ENCODE measurements at regions of chr14 and their contacts with region 1.

Region 1: GRCh38 chr14:54712465-54713200 is 145.7 kb downstream of the SAMD4A start:
- DNase-seq: no peak
- H3K4me3 ChIP-seq: no peak overlapping the region
- CTCF ChIP-seq: no peak

Region 2: DNA sequence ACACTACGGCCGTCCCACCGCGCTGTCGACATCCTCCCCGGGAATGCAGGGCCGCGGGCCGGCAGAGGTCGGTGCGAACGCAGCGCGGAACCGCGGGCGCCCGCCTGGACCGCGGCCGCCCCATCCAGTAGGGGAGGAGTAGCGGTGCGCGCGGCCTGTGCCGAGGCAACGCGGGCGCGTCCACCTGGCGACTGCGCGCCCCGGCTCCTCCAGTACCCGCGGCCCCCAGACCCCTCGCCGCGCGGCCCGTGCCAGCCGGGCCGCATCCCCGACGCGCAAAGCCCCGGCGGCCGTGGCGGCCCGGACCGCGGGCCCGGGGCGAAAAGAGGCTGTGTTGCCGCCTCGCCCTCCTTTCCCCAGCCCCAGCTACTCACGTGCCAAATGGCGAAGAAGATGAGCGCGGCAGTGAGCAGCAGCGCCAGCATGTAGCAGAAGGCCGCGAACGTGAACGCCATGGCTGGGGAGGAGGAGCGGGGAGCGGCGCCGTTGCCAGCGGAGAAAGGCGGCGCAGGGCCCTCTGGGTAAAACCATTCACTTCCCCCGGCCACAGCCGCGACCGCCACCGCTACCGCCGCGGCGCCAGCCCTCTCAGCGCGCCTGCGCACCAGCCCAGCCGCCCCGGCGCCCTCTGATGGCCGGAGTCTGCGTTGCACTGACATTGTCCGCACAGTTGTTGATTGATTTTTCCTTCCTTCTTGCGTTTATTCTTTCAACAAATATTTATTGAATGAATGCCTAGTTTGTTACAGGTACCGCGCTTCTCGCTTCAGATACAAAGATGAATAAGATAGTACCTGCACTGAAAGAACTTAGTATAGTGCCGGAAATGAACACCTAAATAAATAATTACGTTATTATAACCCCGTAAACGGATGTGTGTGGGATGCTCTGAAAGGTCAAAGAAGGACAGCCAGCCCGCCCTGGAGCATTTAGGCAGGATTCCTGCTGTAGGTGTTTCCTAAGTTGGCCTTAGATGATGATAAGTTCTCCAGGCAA is 271.5 kb before region 1 on chr14 and contains the start of gene CNIH1:
- CTCF ChIA-PET with region 1: no interaction called
- POLR2A ChIA-PET with region 1: no interaction called
- DNase-seq: no peak
- H3K4me3 ChIP-seq: peak within 1 kb of the TSS; percentile 80
- CTCF ChIP-seq: peak; percentile 89

Region 3: DNA sequence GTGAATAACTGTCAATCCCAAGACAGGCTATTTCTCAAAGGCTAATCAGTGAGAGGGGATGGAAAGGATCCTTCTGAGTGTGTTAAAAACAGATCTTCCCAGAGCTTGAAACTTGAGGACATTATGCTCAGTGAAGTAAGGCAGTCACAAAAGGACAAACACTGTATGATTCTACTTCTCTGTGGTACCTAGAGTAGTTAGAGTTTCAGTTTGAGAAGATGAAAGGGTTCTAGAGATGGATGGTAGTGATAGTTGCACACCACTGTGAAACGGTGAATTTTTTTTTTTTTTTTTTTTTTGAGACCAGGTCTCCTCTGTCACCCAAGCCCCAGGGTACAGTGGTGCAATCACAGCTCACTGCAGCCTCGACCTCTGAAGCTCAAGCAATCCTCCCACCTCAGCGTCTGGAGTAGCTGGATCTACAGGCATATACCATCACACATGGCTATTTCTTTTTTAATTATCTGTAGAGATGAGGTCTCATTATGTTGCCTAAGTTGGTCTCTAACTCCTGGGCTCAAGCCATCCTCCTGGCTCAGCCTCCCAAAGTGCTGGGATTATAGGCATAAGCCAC is 11.8 kb before region 1 on chr14:
- CTCF ChIA-PET with region 1: interaction called, 14 read pairs
- POLR2A ChIA-PET with region 1: no interaction called
- DNase-seq: no peak
- H3K4me3 ChIP-seq: no peak overlapping the region
- CTCF ChIP-seq: no peak

Measured in AG04449 (cell line).